Mammary epithelial cell (primary cell): ENCODE measurements at regions of chr11 and their contacts with region 1.

Region 1: GRCh38 chr11:118797510-118797909 is 6.5 kb upstream of the DDX6 start:
- DNase-seq: no peak
- H3K4me3 ChIP-seq: no peak overlapping the region
- H3K27ac ChIP-seq: no peak overlapping the region
- H3K4me1 ChIP-seq: peaks cover 2% of the 10 kb centered on the region
- H3K27me3 ChIP-seq: no peaks in the 10 kb centered on the region
- CTCF ChIP-seq: no peak

Region 2: DNA sequence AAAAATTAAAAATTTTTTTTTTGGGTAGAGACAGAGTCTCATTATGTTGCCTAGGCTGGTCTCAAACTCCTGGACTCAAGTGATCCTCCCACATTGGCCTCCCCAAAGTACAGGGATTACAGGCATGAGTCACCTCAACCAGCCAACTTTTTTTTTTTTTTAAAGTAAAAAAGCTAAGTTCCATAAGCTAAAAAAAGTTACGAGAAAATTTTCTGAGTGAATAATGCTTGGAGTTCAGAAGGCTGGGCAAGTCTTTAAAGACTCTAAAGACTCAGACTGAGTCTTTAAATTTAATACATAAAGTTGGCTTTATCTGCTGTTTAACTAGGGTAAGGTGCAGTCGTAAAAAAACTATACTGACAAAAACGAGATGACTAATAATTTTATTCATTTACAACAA is 12.1 kb before region 1 on chr11:
- CTCF ChIA-PET with region 1: no interaction called
- dilution Hi-C with region 1: no loop called
- in situ Hi-C with region 1: no loop called
- intact Hi-C with region 1: no loop called
- DNase-seq: no peak
- H3K4me3 ChIP-seq: no peak overlapping the region
- H3K27ac ChIP-seq: no peak overlapping the region
- H3K4me1 ChIP-seq: peaks cover 7% of the 10 kb centered on the region
- H3K27me3 ChIP-seq: no peaks in the 10 kb centered on the region
- CTCF ChIP-seq: no peak

Region 3: DNA sequence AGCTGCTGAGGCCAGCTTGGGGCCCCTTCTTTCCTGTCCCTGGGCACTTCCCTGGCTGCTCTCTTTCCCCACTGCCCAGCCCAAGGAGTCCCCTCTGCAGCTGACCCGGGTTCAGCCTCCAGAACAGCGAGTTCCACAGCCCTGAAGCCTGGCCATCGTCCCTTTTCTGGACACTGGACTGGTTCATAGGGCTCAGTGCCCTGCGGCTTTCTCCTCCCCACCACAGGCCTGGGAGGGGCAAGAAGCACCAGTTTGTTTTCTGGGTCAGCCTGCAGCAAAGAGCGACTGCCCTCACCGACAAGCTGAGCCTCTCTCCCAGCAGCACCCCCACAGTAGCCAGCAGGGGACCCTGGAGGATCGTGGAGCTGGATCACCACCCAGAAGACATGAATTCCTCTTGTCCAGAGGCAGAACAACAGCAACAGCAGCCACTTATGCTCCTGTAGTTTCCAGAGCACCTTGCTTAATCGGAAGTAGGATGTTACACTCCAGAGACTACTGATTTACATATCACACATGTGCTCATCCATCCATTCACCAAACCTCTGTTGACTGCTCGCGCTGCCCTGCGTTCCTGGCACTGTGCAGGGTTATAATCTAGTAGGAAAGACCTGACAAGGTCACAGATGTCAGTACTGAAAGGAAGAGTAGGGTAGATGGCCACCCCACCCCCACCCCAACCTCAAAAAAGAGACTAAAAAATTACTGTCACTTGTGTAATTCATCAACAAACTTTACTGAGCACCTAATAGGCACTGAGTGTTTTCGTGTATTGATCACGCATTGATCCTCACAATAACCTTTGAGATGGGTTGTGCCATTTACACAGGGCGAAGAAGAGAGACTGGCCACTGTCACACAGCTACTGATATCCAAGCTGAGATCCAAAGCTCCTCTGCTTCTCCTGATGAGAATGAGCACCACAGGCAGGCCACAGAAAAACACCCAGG is 73.2 kb after region 1 on chr11:
- CTCF ChIA-PET with region 1: no interaction called
- dilution Hi-C with region 1: no loop called
- in situ Hi-C with region 1: no loop called
- intact Hi-C with region 1: loop called (anchors 5 kb)
- DNase-seq: no peak
- H3K4me3 ChIP-seq: no peak overlapping the region
- H3K27ac ChIP-seq: no peak overlapping the region
- H3K4me1 ChIP-seq: peaks cover 13% of the 10 kb centered on the region
- H3K27me3 ChIP-seq: no peaks in the 10 kb centered on the region
- CTCF ChIP-seq: no peak